ENCODE measurements at regions of chr5 and their contacts with region 1.

Region 1: DNA sequence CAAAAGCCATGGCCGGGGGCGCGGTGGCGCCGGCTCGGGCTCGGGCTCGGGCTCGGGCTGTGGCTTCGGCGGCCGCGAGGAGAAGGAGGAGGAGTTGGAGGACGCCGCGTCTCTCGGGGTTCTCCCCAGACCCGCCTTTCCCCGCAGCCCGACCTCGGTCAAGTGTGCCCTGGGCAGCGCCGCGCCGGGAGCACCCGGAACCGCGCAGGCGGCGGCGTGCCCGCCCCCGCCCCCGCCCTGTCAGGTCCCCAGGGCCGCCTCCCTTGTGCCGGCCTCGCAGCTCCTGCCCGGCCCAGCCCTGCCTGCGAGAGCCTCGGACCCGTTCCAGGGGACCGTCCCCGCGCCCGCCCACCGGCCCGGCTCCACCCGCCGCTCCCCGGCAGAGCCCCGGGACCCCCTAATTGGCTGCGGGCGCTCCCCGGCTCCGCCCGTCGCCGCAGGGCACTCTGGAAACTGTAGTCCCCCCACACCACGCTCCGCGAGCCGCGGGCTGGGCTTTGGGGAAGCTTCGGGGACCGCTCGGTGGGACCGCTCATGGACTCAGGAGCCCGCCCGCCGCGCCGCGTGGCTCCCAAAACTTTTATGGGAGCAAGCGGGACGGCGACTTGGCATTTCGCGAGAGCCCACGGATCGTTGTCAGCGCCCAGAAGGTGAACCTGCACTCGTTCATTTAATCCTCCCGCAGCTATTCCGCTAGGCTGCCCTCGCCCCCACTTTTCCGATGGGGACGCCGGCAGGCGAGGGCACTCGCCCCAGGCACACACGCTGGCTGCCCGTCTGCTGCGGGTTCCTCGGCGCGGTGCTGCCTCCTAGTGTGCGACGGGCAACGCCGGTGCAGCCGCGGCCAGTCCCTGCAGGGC is at the start of gene STK10:
- DNase-seq: peak; percentile 87 to 97
- ATAC-seq: peak; percentile 86 to 90
- H3K4me3 ChIP-seq: peak within 1 kb of the TSS; percentile 94
- H3K27ac ChIP-seq: peak within 1 kb of the TSS; percentile 77 to 88
- H3K4me1 ChIP-seq: peaks cover 8% of the 10 kb centered on the region
- CTCF ChIP-seq: peak; percentile 92
- EP300 ChIP-seq: no peak
- POLR2A ChIP-seq: peak; percentile 64
- RAD21 ChIP-seq: peak; percentile 85 to 93
- polyA plus RNA-seq, gene STK10: 4.3 and 5.3 TPM in 2 replicates

Region 2: DNA sequence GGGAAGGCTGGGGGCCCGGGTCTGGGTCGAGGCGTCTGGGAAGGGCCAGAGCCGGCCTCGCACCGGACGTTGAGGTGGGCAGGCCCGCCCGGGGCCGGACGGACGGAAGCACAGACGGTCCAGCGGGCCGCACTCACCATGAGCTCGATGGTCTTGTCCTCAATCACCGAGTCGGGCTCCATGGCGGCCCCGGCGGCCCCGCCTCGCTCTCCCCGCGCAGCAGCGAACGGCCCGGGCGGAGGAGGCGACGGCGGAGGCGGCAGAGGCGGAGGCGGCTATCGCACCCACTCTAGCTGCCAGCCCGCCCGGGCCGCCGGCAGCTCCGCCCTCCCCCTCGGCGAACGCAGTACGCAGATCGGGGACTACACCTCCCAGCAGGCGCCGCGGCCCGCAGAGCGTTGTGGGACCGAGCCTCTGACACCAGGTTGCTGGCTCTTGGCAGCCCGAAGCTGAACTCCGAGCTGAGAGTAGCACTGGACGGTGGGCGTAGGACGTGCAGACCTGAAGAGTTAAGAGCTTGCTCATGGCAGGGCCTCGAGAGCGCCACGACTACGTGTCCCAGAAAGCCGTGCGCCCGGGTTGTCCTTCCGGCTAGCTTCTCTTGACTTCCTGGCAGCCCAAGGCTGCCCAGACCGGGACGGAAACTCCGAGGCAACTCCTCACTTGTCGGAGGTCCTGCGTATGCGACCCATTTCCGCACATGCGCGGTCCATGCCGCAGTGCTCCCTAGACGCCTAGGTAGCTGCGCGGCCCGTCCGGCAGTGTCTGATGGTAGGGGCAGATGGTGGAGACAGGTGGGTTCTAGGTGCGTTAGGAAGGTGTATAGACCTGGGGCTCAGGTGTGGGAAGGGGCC is 181.7 kb before region 1 on chr5 and contains the start of gene FBXW11:
- CTCF ChIA-PET with region 1: interaction called, 11 read pairs
- POLR2A ChIA-PET with region 1: interaction called, 10 read pairs
- DNase-seq: peak; percentile 97
- ATAC-seq: peak; percentile 93 to 94
- H3K4me3 ChIP-seq: peak within 1 kb of the TSS; percentile 93
- H3K27ac ChIP-seq: peak within 1 kb of the TSS; percentile 94 to 98
- H3K4me1 ChIP-seq: peaks cover 30% of the 10 kb centered on the region
- CTCF ChIP-seq: no peak
- EP300 ChIP-seq: no peak
- POLR2A ChIP-seq: peak; percentile 99
- RAD21 ChIP-seq: no peak; a peak in 1 of 5 replicates
- polyA plus RNA-seq, gene FBXW11: 80.2 and 87.4 TPM in 2 replicates

Region 3: DNA sequence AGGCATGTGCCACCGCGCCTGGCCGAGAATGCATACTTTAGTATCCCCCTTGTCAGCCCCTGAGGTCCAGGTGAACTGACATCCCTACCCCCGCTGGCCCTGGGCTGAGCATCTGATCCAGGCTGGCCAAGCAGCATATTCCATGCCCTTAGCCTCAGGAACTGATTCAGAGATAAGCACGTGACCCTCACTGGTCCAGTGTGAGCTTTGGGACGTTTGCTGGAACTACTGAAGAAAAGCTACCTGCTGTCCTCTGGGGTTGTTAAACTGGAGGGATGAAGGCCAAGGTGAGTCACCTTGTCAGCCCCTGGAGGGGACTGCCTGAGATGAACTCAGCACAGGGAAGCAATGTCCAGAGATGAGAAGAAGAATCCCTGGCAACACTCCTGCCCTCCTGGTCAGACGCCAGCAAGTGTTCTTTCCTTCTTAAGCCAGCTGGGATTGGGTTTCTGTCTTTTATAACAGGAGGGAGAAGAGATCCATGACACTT is 122.7 kb before region 1 on chr5:
- CTCF ChIA-PET with region 1: interaction called, 11 read pairs
- POLR2A ChIA-PET with region 1: no interaction called
- DNase-seq: no peak
- ATAC-seq: no peak
- H3K4me3 ChIP-seq: no peak overlapping the region
- H3K27ac ChIP-seq: no peak overlapping the region
- H3K4me1 ChIP-seq: no peaks in the 10 kb centered on the region
- CTCF ChIP-seq: no peak
- EP300 ChIP-seq: no peak
- POLR2A ChIP-seq: no peak
- RAD21 ChIP-seq: no peak

Region 4: DNA sequence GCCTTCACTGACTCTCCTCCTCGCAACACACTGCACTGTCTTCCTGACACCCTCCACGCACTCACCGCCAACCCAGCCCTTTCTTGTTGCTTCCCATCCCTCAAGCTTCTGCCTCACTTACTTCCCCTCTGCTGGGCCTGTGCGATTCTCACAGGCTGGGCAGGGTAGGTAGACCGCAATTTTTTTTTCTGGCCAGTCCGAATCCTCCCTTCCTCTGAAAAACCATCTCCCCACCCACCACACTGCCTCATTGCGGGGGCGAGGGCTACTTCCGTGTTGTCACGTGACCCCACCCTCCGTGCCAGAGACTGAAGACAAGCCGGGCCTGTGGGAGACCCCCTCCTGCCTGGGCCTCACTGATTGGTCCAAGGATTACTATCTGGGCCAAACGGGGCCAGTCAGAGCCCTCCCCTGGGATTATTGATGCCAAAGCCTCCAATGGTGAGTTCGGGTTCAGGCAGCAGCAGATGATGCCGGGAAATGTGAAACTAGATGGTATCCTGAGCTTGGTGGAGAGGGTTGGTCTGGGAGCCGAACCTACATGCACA is 73.3 kb before region 1 on chr5:
- CTCF ChIA-PET with region 1: interaction called, 15 read pairs
- POLR2A ChIA-PET with region 1: interaction called, 3 read pairs
- DNase-seq: no peak
- ATAC-seq: no peak
- H3K4me3 ChIP-seq: no peak overlapping the region
- H3K27ac ChIP-seq: no peak overlapping the region
- H3K4me1 ChIP-seq: 0 out of 3 replicates have a peak, but pooled peaks cover 4% of the 10 kb centered on the region
- CTCF ChIP-seq: no peak
- EP300 ChIP-seq: no peak
- POLR2A ChIP-seq: no peak
- RAD21 ChIP-seq: no peak

Region 5: DNA sequence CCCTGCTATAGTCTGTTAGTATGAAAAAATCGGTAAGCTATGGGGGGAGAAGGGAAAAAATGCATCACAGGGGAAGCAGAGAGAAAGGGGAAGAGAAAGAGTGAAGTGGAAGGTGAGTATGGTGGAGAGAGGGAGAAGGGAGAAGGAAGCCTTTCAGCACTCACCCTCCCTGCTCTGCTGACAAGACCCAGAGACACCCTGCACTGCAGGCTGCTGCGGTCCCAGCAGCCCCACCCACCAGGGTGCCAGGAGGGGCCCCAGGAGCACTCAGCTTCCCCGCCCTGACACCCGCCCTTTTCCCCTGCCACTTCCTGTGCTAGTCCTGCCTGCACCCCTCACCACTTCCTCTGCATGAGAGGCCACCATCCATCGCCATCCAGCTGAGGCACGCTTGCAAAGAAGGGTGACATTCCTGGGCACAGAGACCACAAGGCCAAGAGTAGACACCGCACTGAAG is 13.0 kb before region 1 on chr5:
- CTCF ChIA-PET with region 1: interaction called, 41 read pairs
- POLR2A ChIA-PET with region 1: interaction called, 3 read pairs
- DNase-seq: no peak
- ATAC-seq: no peak
- H3K4me3 ChIP-seq: no peak overlapping the region
- H3K27ac ChIP-seq: no peak overlapping the region
- H3K4me1 ChIP-seq: no peaks in the 10 kb centered on the region
- CTCF ChIP-seq: no peak
- EP300 ChIP-seq: no peak
- POLR2A ChIP-seq: no peak
- RAD21 ChIP-seq: no peak

Region 6: GRCh38 chr5:172207511-172207910 is 19.2 kb after region 1 on chr5:
- CTCF ChIA-PET with region 1: interaction called, 25 read pairs
- POLR2A ChIA-PET with region 1: no interaction called
- DNase-seq: no peak
- ATAC-seq: no peak
- H3K4me3 ChIP-seq: no peak overlapping the region
- H3K27ac ChIP-seq: no peak overlapping the region
- H3K4me1 ChIP-seq: no peaks in the 10 kb centered on the region
- CTCF ChIP-seq: no peak
- EP300 ChIP-seq: no peak
- POLR2A ChIP-seq: no peak
- RAD21 ChIP-seq: no peak

Region 7: GRCh38 chr5:172293054-172293744 is 104.9 kb after region 1 on chr5:
- CTCF ChIA-PET with region 1: interaction called, 13 read pairs
- POLR2A ChIA-PET with region 1: no interaction called
- DNase-seq: peak; percentile 58 to 73
- ATAC-seq: peak; percentile 99
- H3K4me3 ChIP-seq: no peak overlapping the region
- H3K27ac ChIP-seq: 0 out of 6 replicates have a peak overlapping the region, but pooled peaks of 1 of the 2 experiments have one; percentile 2
- H3K4me1 ChIP-seq: no peaks in the 10 kb centered on the region; the same call in 2 of the 3 replicates
- CTCF ChIP-seq: peak; percentile 93
- EP300 ChIP-seq: no peak
- POLR2A ChIP-seq: no peak
- RAD21 ChIP-seq: peak; percentile 87 to 96